ENCODE measurements at regions of chr6 and their contacts with region 1.

Region 1: DNA sequence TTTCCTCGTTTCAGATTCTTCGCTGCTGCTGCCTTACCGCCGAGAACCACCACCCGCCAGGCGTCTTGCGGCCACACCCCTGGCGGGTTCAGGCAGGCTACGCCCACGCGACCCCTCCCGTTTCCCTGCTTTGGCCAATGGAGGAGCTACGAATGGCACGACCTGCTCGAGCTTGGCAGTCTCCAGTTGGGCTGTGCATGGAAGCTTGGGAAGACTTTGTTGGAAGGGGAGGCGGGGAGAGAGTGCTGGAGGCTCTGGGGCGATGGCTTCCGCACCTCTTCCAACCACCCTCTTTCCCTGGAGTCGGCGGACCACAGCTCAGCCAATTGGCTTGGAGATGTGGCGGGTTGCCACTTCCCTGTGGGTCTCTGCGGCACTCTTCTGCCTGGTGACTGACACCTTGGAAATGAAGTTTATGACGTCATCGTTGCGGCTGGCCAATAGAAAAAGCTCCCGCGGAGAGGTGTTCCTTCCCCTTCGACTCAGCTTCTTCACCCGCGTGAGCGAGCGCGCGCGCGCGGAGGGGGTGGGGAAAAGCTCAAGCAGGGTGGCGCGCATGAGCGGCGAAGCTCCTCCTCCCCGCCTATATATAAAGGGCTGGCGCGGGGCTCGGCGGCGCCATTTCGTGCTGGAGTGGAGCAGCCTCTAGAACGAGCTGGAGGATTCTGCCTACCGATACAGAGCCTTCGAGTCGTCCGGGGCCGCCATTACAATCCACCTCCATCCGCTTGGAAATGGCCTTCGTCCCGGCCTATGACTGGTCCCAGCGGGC is 3.4 kb downstream of the BRD2 start:
- DNase-seq: peak; percentile 99
- ATAC-seq: peak; percentile 47
- H3K4me3 Mint-ChIP-seq: peak overlapping the region; percentile 91
- H3K27ac Mint-ChIP-seq: peak overlapping the region; percentile 99
- H3K4me1 Mint-ChIP-seq: peaks cover 44% of the 10 kb centered on the region
- H3K27me3 Mint-ChIP-seq: no peaks in the 10 kb centered on the region
- CTCF ChIP-seq: no peak

Region 2: DNA sequence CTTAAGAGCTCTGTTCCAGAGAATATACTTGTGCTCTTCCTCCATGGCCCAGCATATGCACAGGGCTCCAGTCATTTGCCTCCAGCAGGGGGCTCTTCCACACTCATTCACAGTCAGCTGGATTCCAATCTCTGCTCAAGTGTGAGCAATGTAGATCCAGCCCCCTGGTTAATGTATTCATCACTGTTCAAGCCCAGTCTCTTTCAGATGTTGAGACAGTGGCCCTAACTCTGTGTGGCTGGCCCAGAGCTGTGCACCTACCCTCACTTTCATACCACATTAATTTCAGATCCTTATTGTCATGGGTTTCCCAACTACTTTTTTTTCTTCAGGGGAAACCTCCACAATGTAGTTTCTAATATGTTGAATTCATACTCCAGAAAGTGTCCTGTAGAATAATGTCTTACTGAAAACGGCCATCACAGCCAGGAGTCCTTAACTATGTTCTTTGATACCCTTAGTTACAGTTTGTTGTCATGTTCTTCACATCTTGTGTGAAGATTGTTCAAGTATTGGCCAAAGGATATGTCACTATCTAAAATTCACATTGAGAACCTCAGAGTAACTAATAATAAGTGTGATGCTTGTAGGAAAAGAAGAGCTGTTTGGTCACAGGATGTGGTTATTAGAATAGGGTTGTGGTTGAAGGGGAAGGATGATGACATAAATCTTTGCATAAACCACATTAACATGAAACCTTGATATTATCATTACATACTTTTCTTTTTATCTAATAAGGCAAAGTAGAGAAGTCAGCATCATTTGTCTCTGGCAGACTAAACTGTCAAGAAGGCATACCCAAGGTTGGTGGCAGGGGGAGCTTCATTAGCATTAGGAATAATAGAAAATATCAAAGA is 349.0 kb before region 1 on chr6:
- CTCF ChIA-PET with region 1: no interaction called
- POLR2A ChIA-PET with region 1: interaction called, 13 read pairs
- intact Hi-C with region 1: loop called (anchors 5 kb)
- DNase-seq: peak; percentile 42
- ATAC-seq: peak; percentile 75
- H3K4me3 Mint-ChIP-seq: peak overlapping the region; percentile 80
- H3K27ac Mint-ChIP-seq: peak overlapping the region; percentile 100
- H3K4me1 Mint-ChIP-seq: peaks cover 75% of the 10 kb centered on the region
- H3K27me3 Mint-ChIP-seq: no peaks in the 10 kb centered on the region
- CTCF ChIP-seq: no peak

Region 3: DNA sequence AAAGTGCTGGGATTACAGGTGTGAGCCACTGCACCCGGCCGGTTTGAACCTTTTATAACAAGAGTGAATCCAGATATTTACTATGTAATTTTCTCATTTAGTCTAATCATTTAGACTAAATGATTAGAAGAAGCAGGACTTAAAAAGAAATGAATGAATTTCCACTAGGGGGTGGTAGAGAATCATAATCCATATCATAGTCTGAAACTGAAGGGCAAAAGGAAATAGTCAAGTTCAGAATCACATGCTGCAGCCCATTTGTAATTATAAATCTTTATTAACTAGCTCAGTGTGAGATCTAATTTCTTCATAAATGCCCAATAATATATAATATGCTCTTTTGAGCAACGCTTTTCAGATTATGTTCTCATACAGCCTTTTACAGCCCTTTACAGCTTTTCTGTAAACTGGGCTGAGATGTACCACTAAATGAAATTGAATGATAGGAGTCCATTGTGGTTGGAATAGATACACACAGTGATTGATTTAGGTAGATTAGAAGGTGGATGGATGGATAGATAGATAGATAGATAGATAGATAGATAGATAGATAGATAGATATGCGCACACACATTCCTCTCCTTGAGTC is 86.0 kb before region 1 on chr6:
- CTCF ChIA-PET with region 1: interaction called, 18 read pairs
- POLR2A ChIA-PET with region 1: interaction called, 62 read pairs
- intact Hi-C with region 1: loop called (anchors 1 kb)
- DNase-seq: no peak
- ATAC-seq: peak; percentile 68
- H3K4me3 Mint-ChIP-seq: no peak overlapping the region
- H3K27ac Mint-ChIP-seq: no peak overlapping the region
- H3K4me1 Mint-ChIP-seq: peaks cover 27% of the 10 kb centered on the region
- H3K27me3 Mint-ChIP-seq: no peaks in the 10 kb centered on the region
- CTCF ChIP-seq: no peak

Region 4: DNA sequence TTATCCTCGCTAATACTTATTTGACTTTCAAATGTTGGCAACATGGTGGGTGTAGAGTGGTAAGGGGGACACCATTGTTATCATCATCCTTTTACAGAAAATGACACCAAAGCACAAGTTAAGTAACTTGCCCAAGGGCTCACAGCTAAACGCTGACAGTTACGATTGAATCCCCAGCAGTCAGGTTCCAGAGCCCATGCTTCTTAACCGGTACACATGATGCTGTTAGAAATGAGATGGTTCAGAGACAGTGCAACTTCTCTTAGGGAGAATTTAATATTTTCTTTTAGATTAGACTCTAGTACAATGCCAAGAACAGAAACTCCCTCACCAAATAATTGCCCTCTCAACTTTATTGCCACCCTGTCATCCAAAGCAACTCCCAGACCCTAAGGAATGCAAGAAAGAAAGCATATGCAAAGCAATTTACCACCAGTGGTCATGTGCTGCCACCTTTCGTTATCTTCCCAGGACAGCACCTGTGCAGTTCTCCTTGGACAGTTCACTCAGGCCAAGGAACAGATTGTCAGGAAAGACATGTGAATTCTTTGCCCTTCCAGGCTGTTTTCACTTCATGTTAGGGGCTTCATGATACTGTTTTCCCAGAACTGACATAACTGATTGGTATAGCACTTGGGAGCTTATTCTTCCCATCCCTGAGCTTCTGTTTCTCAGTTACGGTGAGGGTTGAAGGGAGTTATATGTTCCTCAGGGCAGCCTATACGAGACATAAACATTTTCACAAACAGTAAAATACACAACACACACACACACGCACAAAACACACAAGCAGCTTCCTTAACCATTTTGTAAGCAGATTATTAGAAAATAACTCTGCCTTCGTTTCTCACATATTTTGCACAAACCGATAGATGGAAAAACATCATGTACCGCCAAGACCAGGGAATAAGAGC is 24.0 kb before region 1 on chr6:
- CTCF ChIA-PET with region 1: interaction called, 151 read pairs
- POLR2A ChIA-PET with region 1: interaction called, 1,150 read pairs
- intact Hi-C with region 1: loop called (anchors 1 kb)
- DNase-seq: no peak
- ATAC-seq: no peak
- H3K4me3 Mint-ChIP-seq: peak overlapping the region; percentile 98
- H3K27ac Mint-ChIP-seq: peak overlapping the region; percentile 99
- H3K4me1 Mint-ChIP-seq: peaks cover 94% of the 10 kb centered on the region
- H3K27me3 Mint-ChIP-seq: no peaks in the 10 kb centered on the region
- CTCF ChIP-seq: no peak

Region 5: GRCh38 chr6:33029328-33030184 is 57.8 kb after region 1 on chr6:
- CTCF ChIA-PET with region 1: no interaction called
- POLR2A ChIA-PET with region 1: interaction called, 60 read pairs
- intact Hi-C with region 1: no loop called
- DNase-seq: peak; percentile 56
- ATAC-seq: peak; percentile 77
- H3K4me3 Mint-ChIP-seq: peak overlapping the region; percentile 77
- H3K27ac Mint-ChIP-seq: peak overlapping the region; percentile 100
- H3K4me1 Mint-ChIP-seq: peaks cover 81% of the 10 kb centered on the region
- H3K27me3 Mint-ChIP-seq: no peaks in the 10 kb centered on the region
- CTCF ChIP-seq: no peak

Region 6: GRCh38 chr6:33271458-33272274 is 299.9 kb after region 1 on chr6 and contains the starts of genes RPS18 and VPS52:
- CTCF ChIA-PET with region 1: no interaction called
- POLR2A ChIA-PET with region 1: interaction called, 26 read pairs
- intact Hi-C with region 1: no loop called
- DNase-seq: peak; percentile 79
- ATAC-seq: peak; percentile 84
- H3K4me3 Mint-ChIP-seq: peak within 1 kb of the TSS; percentile 100
- H3K27ac Mint-ChIP-seq: peak within 1 kb of the TSS; percentile 100
- H3K4me1 Mint-ChIP-seq: peaks cover 59% of the 10 kb centered on the region
- H3K27me3 Mint-ChIP-seq: no peaks in the 10 kb centered on the region
- CTCF ChIP-seq: no peak
- total RNA-seq, gene RPS18: 4,710 and 5,877 TPM in 2 replicates
- total RNA-seq, gene VPS52: 82.0 and 97.2 TPM in 2 replicates

Region 7: DNA sequence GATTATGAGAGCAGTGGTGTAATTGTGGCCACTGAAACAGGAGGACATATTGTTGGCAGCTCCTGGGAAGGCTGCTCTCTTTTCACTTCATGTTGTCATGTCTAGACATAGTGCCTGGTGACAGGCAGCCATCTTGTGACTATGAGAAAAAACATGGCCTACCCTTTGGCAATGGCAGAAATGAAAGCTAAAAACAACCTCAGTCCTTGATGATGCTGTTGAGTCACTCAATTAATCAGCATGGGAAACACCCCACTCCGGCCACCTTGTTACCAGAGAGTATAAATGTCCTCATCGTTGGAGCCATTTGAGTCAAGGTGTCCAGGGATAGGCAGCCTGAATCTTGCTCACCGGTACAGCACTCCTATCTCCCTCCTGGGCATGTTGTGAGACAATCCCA is 1233.7 kb after region 1 on chr6:
- CTCF ChIA-PET with region 1: no interaction called
- POLR2A ChIA-PET with region 1: no interaction called
- intact Hi-C with region 1: no loop called
- DNase-seq: no peak
- ATAC-seq: no peak
- H3K4me3 Mint-ChIP-seq: no peak overlapping the region
- H3K27ac Mint-ChIP-seq: no peak overlapping the region
- H3K4me1 Mint-ChIP-seq: no peaks in the 10 kb centered on the region
- H3K27me3 Mint-ChIP-seq: no peaks in the 10 kb centered on the region
- CTCF ChIP-seq: no peak